Upper lobe of right lung (tissue), 1 donor: ENCODE measurements at regions of chr4 and their contacts with region 1.

Region 1: GRCh38 chr4:88533937-88534750 is 10.6 kb upstream of the PYURF start:
- DNase-seq: no peak
- ATAC-seq: no peak
- H3K4me3 ChIP-seq: no peak overlapping the region
- H3K27ac ChIP-seq: no peak overlapping the region
- H3K4me1 ChIP-seq: no peaks in the 10 kb centered on the region
- H3K27me3 ChIP-seq: no peaks in the 10 kb centered on the region
- CTCF ChIP-seq: no peak

Region 2: GRCh38 chr4:88661739-88662138 is 127.6 kb after region 1 on chr4:
- intact Hi-C with region 1: loop called (anchors 10 kb)
- DNase-seq: no peak
- ATAC-seq: no peak
- H3K4me3 ChIP-seq: no peak overlapping the region
- H3K27ac ChIP-seq: no peak overlapping the region
- H3K4me1 ChIP-seq: no peaks in the 10 kb centered on the region
- H3K27me3 ChIP-seq: no peaks in the 10 kb centered on the region
- CTCF ChIP-seq: no peak